ENCODE measurements at regions of chr1 and their contacts with region 1.

Region 1: GRCh38 chr1:145711213-145711651 is 4.1 kb upstream of the PDZK1 start:
- DNase-seq: no peak
- ATAC-seq: no peak
- H3K4me3 ChIP-seq: no peak overlapping the region
- H3K27ac ChIP-seq: no peak overlapping the region
- H3K4me1 ChIP-seq: peaks cover 0 to 5% (median 0%) of the 10 kb centered on the region in 9 donors
- H3K27me3 ChIP-seq: no peaks in the 10 kb centered on the region
- CTCF ChIP-seq: no peak

Region 2: GRCh38 chr1:145751491-145752037 is 40.3 kb after region 1 on chr1:
- intact Hi-C with region 1: loop called in 1 of 10 experiments (anchors 2 kb)
- DNase-seq: no peak
- ATAC-seq: no peak
- H3K4me3 ChIP-seq: no peak overlapping the region
- H3K27ac ChIP-seq: peak overlapping the region in 1 of 10 donors; percentile 22
- H3K4me1 ChIP-seq: peaks cover 0 to 23% (median 0%) of the 10 kb centered on the region in 9 donors
- H3K27me3 ChIP-seq: no peaks in the 10 kb centered on the region
- CTCF ChIP-seq: no peak

Region 3: GRCh38 chr1:146039846-146040199 is 328.6 kb after region 1 on chr1:
- intact Hi-C with region 1: no loop called
- DNase-seq: no peak
- ATAC-seq: no peak
- H3K4me3 ChIP-seq: peak overlapping the region in 7 of 10 donors; percentile 62 to 76 (median 68)
- H3K27ac ChIP-seq: peak overlapping the region in 7 of 10 donors; percentile 6 to 91 (median 87)
- H3K4me1 ChIP-seq: peaks cover 0 to 42% (median 9%) of the 10 kb centered on the region in 9 donors
- H3K27me3 ChIP-seq: no peaks in the 10 kb centered on the region
- CTCF ChIP-seq: no peak